GM12878 (cell line): ENCODE measurements at regions of chr9 and their contacts with region 1.

Region 1: DNA sequence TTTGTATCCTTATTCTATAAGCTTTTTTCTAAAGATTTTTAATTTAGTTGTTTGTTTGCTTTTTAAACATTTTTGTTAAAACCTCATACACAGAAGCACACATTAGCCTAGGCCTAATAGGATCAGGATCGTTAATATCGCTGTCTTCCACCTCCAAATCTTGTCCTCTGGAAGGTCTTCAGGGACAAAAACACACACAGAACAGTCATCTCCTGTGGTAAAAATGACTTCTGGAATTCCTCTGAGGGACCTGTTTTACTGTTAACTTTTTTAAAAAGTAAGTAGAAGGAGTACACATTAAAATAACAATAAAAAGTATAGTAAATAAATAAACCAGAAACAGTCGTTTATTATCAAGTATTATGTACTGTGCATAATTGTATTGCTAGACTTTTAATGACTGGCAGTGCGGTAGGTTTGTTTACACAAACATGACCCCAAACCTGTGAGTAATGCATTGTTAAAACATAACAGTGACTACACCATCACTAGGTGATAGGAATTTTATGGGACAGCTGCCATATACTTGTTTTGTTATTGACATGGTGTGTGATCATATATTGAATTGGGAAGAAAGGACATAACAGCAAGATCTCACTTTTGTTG is 109.6 kb downstream of the ZCCHC7 start:
- DNase-seq: no peak
- ATAC-seq: no peak
- H3K4me3 ChIP-seq: no peak overlapping the region
- H3K27ac ChIP-seq: no peak overlapping the region
- H3K4me1 ChIP-seq: no peaks in the 10 kb centered on the region
- H3K27me3 ChIP-seq: no peaks in the 10 kb centered on the region
- CTCF ChIP-seq: no peak
- EP300 ChIP-seq: no peak
- POLR2A ChIP-seq: no peak
- RAD21 ChIP-seq: no peak

Region 2: GRCh38 chr9:37215830-37216229 is 14.2 kb before region 1 on chr9:
- CTCF ChIA-PET with region 1: interaction called, 13 read pairs
- POLR2A ChIA-PET with region 1: interaction called, 8 read pairs
- RAD21 ChIA-PET with region 1: interaction called, 9 read pairs
- SMC1A ChIA-PET with region 1: interaction called, 85 read pairs
- in situ Hi-C with region 1: no loop called
- intact Hi-C with region 1: no loop called
- DNase-seq: no peak
- ATAC-seq: no peak
- H3K4me3 ChIP-seq: no peak overlapping the region
- H3K27ac ChIP-seq: no peak overlapping the region
- H3K4me1 ChIP-seq: peaks cover 3% of the 10 kb centered on the region
- H3K27me3 ChIP-seq: no peaks in the 10 kb centered on the region
- CTCF ChIP-seq: no peak
- EP300 ChIP-seq: no peak
- POLR2A ChIP-seq: no peak
- RAD21 ChIP-seq: no peak